ENCODE measurements at regions of chr11 and their contacts with region 1.

Region 1: GRCh38 chr11:73671701-73672100 is 25.3 kb downstream of the PLEKHB1 start:
- DNase-seq: no peak
- H3K4me3 ChIP-seq: no peak overlapping the region
- H3K27ac ChIP-seq: no peak overlapping the region
- H3K4me1 ChIP-seq: no peaks in the 10 kb centered on the region
- H3K27me3 ChIP-seq: no peaks in the 10 kb centered on the region
- CTCF ChIP-seq: no peak

Region 2: DNA sequence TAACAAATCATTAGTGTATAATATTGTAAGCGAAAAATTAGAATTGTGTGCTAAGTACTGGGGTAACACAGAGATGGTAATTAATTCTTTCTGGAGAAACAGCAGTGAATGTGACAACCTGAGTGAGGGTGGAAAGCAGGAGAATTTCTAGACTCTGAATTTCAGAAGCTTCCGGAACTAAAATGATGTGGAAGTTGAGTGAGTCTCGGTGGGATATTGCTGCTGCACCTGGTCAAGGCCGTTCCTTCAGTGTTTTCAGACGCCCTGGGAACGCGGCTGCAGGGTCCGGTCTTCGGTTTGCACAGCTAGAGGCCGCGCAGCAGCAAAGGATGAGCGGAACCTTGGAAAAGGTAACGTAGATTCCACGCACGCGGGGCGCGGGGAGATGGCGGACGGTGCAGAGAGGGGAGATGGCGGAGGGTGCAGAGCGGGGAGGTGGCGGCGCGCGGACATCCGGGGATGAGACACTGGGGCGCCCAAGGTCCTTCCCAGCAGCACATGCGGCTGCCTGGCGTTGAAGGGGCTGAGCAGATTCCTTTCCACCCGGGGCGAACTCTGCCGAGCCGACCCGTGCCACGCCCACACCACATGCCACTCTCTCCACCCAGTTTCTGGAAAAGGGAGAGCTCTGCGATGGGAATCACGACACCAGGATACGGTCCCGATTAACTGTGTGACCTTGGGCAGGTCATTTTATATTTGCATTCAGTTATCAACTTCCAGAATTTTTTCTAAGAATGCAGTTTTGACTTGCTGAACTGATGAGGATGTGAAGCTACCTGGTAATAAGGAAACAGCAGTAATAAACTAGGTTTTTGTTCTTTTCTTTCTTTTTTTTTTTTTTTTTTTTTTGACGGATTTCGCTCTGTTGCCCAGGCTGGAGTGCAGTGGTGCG is 116.2 kb after region 1 on chr11 and contains the start of gene MRPL48:
- CTCF ChIA-PET with region 1: no interaction called
- POLR2A ChIA-PET with region 1: interaction called, 17 read pairs
- intact Hi-C with region 1: no loop called
- DNase-seq: peak; percentile 88 to 93
- H3K4me3 ChIP-seq: peak within 1 kb of the TSS; percentile 78
- H3K27ac ChIP-seq: peak within 1 kb of the TSS; percentile 92
- H3K4me1 ChIP-seq: peaks cover 36% of the 10 kb centered on the region
- H3K27me3 ChIP-seq: no peaks in the 10 kb centered on the region
- CTCF ChIP-seq: no peak
- total RNA-seq, gene MRPL48: 58.7 and 64.5 TPM in 2 replicates

Measured in PC-9 (cell line).